ENCODE measurements at regions of chrX and their contacts with region 1.

Region 1: DNA sequence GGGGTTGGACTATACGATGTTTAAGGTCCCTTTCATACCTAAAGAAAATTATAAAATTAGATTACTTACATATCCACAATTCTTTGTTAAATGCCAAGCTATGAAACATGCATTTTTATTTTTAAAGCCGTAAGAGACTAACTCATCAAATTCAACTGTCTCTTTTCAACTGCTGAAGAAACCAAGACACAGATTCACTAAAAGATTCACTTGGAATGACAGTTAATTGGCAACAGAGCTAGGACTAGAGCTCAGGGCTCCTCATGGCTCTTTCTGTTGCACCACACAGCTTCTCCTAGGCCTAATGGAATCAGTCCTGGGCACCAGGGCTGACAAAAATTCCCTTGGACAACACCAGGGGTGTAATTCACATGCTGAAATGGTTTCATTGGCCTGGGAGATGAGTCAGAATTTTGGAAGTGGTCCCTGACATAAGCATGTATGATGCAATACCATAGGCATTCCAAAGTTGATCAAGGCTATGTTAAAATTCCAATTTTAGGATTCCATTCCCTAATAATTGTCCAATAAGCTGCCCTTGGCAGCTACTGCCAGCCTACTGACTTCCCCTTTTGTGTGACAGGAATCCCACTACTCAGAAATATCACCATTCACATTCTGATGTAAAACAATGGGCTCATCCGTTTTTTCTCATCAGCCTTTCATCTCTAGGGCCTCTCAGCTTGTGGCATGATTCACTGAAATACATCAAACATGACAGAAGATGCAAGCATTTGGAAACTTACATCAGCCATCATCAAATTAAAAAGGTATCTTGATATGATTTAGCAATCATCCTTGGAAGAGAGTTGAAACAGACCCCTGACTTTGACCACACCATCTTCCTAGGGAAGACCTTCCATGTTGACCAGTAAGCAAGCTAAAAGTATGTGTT is 54.2 kb downstream of the PLAC1 start:
- DNase-seq: peak; percentile 94
- H3K4me3 Mint-ChIP-seq: no peak overlapping the region
- H3K27ac Mint-ChIP-seq: peak overlapping the region; percentile 3
- H3K4me1 Mint-ChIP-seq: peaks cover 8% of the 10 kb centered on the region
- H3K27me3 Mint-ChIP-seq: peaks cover 6% of the 10 kb centered on the region
- CTCF ChIP-seq: peak; percentile 15

Region 2: DNA sequence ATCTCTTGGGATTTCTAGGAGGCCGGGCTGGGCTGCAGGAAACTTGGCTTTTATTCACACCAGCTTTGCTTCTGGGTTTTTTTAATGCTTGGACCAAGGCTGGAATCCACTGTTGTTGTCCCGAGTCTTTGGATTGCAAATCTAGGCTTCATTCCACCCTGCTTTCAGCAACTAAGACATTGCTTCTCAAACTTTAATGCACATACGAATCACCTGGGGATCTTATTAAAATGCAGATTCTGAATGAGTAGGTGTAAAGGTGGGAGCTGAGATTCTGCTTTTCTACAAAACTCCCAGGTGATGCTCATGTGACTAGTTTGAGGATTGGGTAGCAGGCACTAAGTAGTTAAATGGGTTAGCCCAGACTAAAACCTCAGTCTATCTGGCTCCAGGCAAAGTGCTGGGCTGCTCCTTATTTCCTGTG is 1149.5 kb before region 1 on chrX:
- CTCF ChIA-PET with region 1: no interaction called
- POLR2A ChIA-PET with region 1: no interaction called
- intact Hi-C with region 1: no loop called
- DNase-seq: no peak
- H3K4me3 Mint-ChIP-seq: no peak overlapping the region
- H3K27ac Mint-ChIP-seq: no peak overlapping the region
- H3K4me1 Mint-ChIP-seq: no peaks in the 10 kb centered on the region
- H3K27me3 Mint-ChIP-seq: peaks cover 43% of the 10 kb centered on the region
- CTCF ChIP-seq: no peak

Region 3: GRCh38 chrX:134622056-134622812 is 18.2 kb after region 1 on chrX:
- CTCF ChIA-PET with region 1: interaction called, 16 read pairs
- POLR2A ChIA-PET with region 1: interaction called, 13 read pairs
- intact Hi-C with region 1: no loop called
- DNase-seq: peak; percentile 81
- H3K4me3 Mint-ChIP-seq: peak overlapping the region; percentile 14
- H3K27ac Mint-ChIP-seq: no peak overlapping the region
- H3K4me1 Mint-ChIP-seq: peaks cover 24% of the 10 kb centered on the region
- H3K27me3 Mint-ChIP-seq: no peaks in the 10 kb centered on the region
- CTCF ChIP-seq: no peak

Region 4: GRCh38 chrX:134670134-134670924 is 66.3 kb after region 1 on chrX:
- CTCF ChIA-PET with region 1: no interaction called
- POLR2A ChIA-PET with region 1: interaction called, 4 read pairs
- intact Hi-C with region 1: loop called (anchors 2 kb)
- DNase-seq: peak; percentile 62
- H3K4me3 Mint-ChIP-seq: no peak overlapping the region
- H3K27ac Mint-ChIP-seq: peak overlapping the region; percentile 82
- H3K4me1 Mint-ChIP-seq: peaks cover 23% of the 10 kb centered on the region
- H3K27me3 Mint-ChIP-seq: no peaks in the 10 kb centered on the region
- CTCF ChIP-seq: no peak

Region 5: DNA sequence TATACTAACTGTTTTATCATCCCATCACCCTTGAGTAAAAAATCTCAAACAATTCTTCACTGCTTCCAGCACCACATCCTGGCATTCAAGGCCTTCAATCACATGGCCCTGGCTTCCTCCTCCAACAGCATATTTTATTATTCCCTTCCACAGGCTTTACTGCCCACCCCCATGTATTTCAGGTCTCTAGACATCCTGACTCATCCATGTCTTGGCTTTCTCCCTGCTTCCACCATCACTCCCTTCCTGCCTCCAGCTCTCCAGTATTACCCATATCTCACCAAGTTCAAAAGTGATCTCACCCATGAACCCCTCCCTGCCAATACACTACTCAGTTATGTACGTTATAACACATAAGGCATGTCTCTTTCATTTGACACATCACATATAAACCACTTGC is 88.9 kb after region 1 on chrX:
- CTCF ChIA-PET with region 1: interaction called, 4 read pairs
- POLR2A ChIA-PET with region 1: no interaction called
- intact Hi-C with region 1: loop called (anchors 5 kb)
- DNase-seq: no peak
- H3K4me3 Mint-ChIP-seq: no peak overlapping the region
- H3K27ac Mint-ChIP-seq: peak overlapping the region; percentile 13
- H3K4me1 Mint-ChIP-seq: peaks cover 39% of the 10 kb centered on the region
- H3K27me3 Mint-ChIP-seq: peaks cover 22% of the 10 kb centered on the region
- CTCF ChIP-seq: no peak

Region 6: GRCh38 chrX:134718105-134718965 is 114.3 kb after region 1 on chrX:
- CTCF ChIA-PET with region 1: interaction called, 4 read pairs
- POLR2A ChIA-PET with region 1: no interaction called
- intact Hi-C with region 1: loop called (anchors 1 kb)
- DNase-seq: peak; percentile 91
- H3K4me3 Mint-ChIP-seq: no peak overlapping the region
- H3K27ac Mint-ChIP-seq: peak overlapping the region; percentile 84
- H3K4me1 Mint-ChIP-seq: peaks cover 10% of the 10 kb centered on the region
- H3K27me3 Mint-ChIP-seq: no peaks in the 10 kb centered on the region
- CTCF ChIP-seq: no peak

Region 7: GRCh38 chrX:134753718-134754008 is 149.6 kb after region 1 on chrX:
- CTCF ChIA-PET with region 1: interaction called, 3 read pairs
- POLR2A ChIA-PET with region 1: interaction called, 3 read pairs
- intact Hi-C with region 1: loop called (anchors 2 kb)
- DNase-seq: peak; percentile 31
- H3K4me3 Mint-ChIP-seq: no peak overlapping the region
- H3K27ac Mint-ChIP-seq: no peak overlapping the region
- H3K4me1 Mint-ChIP-seq: no peaks in the 10 kb centered on the region
- H3K27me3 Mint-ChIP-seq: peaks cover 42% of the 10 kb centered on the region
- CTCF ChIP-seq: peak; percentile 26

Region 8: DNA sequence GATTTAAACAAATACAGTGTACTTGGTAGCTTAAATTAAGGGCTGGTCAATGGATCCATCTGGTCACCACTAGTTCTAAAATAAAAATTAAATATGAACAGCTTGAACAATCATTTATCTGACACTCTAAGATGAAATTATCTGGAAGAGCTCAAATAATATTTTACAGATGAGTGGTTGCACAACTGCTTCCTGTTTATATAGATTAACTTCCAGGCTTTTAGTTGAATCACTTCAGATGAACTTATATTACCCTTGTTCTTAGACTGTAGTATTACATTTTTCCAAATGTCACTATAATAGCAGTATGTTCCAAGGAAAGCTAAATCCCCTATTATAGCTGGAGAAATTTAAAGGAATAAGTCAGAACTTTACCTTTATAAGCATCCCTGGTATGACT is 294.4 kb after region 1 on chrX:
- CTCF ChIA-PET with region 1: no interaction called
- POLR2A ChIA-PET with region 1: no interaction called
- intact Hi-C with region 1: no loop called
- DNase-seq: no peak
- H3K4me3 Mint-ChIP-seq: no peak overlapping the region
- H3K27ac Mint-ChIP-seq: no peak overlapping the region
- H3K4me1 Mint-ChIP-seq: no peaks in the 10 kb centered on the region
- H3K27me3 Mint-ChIP-seq: no peaks in the 10 kb centered on the region
- CTCF ChIP-seq: no peak